ENCODE measurements at regions of chr17 and their contacts with region 1.

Region 1: DNA sequence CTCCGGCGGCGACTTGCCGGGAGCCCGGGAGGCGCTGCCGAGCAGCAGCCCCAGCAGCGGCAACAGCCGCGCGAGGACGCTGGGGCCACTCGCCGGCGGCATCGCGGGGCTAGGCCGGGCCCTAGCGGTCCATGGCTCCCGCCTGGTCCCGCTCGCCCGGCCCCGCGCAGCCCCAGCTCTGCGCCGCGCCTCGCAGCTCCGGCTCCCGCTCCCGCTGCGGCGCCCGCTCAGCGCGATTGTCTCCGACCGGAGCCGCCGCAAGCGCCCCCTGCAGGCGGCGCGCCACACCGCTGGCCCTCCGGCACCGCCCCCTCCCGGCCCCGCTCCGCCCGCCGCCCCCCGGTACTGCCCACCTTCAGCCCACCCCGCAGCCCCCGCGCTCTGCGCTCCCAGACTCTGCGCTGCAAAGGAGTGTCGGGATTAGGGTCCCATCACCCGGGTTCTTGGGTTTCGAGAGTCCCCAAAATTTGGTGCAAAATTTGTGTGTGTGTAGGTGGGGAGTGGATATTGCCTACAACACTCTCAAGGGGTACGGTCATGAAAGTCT is at the start of gene FAM171A2:
- DNase-seq: peak in 1 of 2 experiments; percentile 61
- H3K4me3 ChIP-seq: peak within 1 kb of the TSS; percentile 66
- H3K27ac ChIP-seq: no peak within 1 kb of the TSS
- H3K4me1 ChIP-seq: no peaks in the 10 kb centered on the region
- H3K27me3 ChIP-seq: peaks cover 18% of the 10 kb centered on the region; the same call in 1 of the 2 replicates
- CTCF ChIP-seq: peak; percentile 59; the same call in 1 of the 2 replicates
- total RNA-seq, gene FAM171A2: 8.3 and 11.8 TPM in 2 replicates

Region 2: GRCh38 chr17:43840814-43841213 is 522.9 kb before region 1 on chr17:
- CTCF ChIA-PET with region 1: no interaction called
- POLR2A ChIA-PET with region 1: interaction called, 13 read pairs
- intact Hi-C with region 1: no loop called
- DNase-seq: peak; percentile 20 to 47
- H3K4me3 ChIP-seq: no peak overlapping the region; the same call in 1 of the 2 replicates
- H3K27ac ChIP-seq: peak overlapping the region; percentile 81
- H3K4me1 ChIP-seq: peaks cover 44% of the 10 kb centered on the region
- H3K27me3 ChIP-seq: no peaks in the 10 kb centered on the region
- CTCF ChIP-seq: 0 out of 2 replicates have a peak, but pooled peaks have one; percentile 29

Region 3: GRCh38 chr17:44314869-44315661 is 48.6 kb before region 1 on chr17:
- CTCF ChIA-PET with region 1: no interaction called
- POLR2A ChIA-PET with region 1: no interaction called
- intact Hi-C with region 1: no loop called
- DNase-seq: peak in 1 of 2 experiments; percentile 53
- H3K4me3 ChIP-seq: no peak overlapping the region
- H3K27ac ChIP-seq: no peak overlapping the region
- H3K4me1 ChIP-seq: no peaks in the 10 kb centered on the region
- H3K27me3 ChIP-seq: no peaks in the 10 kb centered on the region
- CTCF ChIP-seq: no peak

Region 4: DNA sequence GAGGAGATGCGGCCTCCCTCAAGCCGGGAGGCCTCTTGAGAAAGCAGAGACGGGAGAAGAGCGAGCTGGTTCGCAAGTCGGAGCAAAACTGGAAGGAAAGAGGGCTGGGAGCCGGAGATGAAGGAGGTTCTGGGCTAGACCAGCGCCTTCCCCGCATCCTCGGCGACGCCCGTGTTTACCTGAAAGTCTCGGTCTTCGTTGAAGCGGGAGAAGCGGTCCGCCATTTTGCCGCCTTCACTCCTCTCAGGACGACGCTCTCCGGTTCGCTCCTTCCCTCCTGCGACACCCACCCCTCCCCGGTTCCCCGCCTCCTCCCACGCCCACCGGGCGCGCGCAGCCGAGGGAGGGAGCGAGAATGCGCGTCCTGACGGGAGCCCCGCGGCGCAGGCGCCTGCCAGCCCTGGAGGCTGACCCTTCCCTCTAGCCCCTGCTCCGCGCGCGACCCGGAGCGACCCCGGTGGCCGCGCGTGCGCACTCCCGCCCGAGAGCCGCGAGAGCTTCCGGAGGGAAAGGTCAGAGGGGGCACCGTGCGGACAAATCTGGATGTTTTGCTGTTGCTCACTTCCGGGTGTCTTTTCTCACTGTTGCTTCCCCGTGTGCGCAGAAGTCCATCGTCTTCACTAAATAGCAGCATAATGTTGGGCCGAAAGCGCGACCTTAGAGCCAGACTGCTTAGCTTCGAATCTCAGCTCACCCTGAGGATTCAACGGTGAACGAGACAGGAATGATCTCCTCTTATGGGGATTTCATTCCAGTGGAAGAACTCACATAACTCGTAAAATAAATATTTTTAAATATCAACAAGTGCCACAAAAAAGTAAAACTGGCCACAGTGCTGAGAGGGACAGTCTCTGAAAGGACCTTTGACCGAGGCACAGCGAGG is 139.7 kb after region 1 on chr17 and contains the start of gene GPATCH8:
- CTCF ChIA-PET with region 1: no interaction called
- POLR2A ChIA-PET with region 1: no interaction called
- intact Hi-C with region 1: loop called (anchors 2 kb)
- DNase-seq: peak; percentile 84 to 97
- H3K4me3 ChIP-seq: peak within 1 kb of the TSS; percentile 94
- H3K27ac ChIP-seq: peak within 1 kb of the TSS; percentile 79
- H3K4me1 ChIP-seq: peaks cover 32% of the 10 kb centered on the region
- H3K27me3 ChIP-seq: no peaks in the 10 kb centered on the region
- CTCF ChIP-seq: no peak
- total RNA-seq, gene GPATCH8: 31.0 and 39.4 TPM in 2 replicates